Activated CD4-positive, alpha-beta memory T cell treated with anti-CD3 and anti-CD28 coated beads for 36 hours (primary cell): ENCODE measurements at regions of chr21 and their contacts with region 1.

Region 1: DNA sequence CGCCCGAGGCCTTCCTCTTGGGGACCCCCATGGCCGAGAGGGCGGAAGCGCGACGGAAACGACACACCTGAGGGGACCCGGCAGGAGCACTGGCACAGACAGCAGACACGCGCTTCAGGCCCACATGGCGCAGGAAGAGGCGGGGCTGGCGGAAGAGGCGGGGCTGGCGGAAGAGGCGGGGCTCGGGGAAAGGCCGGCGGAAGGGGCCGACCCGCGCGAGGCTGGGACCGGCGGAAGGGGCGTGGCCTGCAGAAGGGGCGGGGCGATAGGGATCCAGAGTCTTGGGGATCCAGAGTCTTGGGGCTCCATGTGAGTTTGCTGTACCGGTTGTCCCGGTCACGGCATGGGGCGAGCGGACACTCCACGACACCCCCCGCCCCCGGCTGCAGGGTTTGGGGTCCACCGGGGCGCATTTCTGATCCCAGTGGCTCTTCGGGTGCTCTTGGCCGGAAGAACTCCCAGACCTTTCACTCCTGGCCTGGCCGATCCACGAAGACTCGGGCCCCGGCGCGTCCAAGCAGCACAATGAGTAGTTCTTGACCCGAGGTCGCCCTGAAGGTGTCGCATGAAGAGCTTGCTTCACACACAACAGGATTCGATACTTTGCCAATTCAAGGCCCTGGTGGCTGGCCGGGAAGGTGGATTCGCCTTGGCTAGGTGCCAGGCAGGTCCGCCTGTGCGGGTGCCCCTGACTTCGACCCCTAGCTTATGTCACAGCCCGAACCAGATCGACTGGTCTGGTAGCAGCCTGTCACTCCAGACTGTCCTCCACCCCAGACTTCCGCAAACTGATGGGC is at the start of gene URB1:
- DNase-seq: peak; percentile 96
- H3K4me3 Mint-ChIP-seq: peak within 1 kb of the TSS; percentile 80
- H3K27ac Mint-ChIP-seq: peak within 1 kb of the TSS; percentile 51
- H3K4me1 Mint-ChIP-seq: peaks cover 43% of the 10 kb centered on the region
- H3K27me3 Mint-ChIP-seq: peaks cover 2% of the 10 kb centered on the region
- total RNA-seq, gene URB1: 21.5 to 23.4 TPM

Region 2: GRCh38 chr21:32278518-32279376 is 114.3 kb before region 1 on chr21 and contains the start of gene MIS18A:
- CTCF ChIA-PET with region 1: no interaction called
- POLR2A ChIA-PET with region 1: no interaction called
- intact Hi-C with region 1: loop called (anchors 1 kb)
- DNase-seq: peak; percentile 99
- H3K4me3 Mint-ChIP-seq: peak within 1 kb of the TSS; percentile 99
- H3K27ac Mint-ChIP-seq: peak within 1 kb of the TSS; percentile 88
- H3K4me1 Mint-ChIP-seq: peaks cover 11% of the 10 kb centered on the region
- H3K27me3 Mint-ChIP-seq: no peaks in the 10 kb centered on the region
- total RNA-seq, gene MIS18A: 34.2 to 36.1 TPM

Region 3: DNA sequence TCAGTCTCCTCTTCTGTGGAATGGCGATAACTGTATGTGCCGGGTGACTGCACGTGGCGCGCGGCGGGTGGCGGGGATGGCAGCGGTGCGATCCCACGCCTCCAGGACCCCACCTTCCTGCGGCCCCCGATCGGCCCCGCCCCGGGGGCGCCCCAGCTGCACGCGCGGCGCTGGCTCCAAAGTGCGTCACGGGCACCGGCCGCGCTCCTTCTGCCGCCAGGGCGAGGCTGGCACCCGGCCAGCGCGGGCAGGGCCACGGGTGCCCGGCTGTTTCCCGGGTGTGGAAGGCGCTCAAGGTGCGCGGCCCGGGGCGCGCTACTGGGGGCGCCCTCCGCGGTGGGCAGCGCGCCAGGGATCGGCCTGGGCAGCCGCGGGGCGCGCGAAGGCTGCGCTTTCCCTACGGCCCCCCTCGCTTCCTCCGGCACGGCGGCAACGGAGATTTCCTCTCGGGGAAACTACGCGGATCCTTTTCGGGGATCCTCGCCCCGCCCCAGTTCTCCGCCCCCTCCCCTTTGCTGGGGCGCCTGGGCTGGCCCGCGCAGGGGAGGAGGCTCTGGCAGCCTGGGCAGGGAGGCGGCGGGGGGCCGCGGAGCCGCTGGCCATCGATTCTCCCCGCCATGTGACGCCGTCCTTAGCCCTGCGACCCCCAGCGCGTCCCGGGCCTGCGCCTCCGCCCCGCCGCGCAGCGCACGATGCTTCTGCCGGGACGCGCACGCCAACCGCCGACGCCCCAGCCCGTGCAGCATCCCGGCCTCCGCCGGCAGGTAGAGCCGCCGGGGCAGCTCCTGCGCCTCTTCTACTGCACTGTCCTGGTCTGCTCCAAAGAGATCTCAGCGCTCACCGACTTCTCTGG is 19.3 kb after region 1 on chr21 and contains the start of gene EVA1C:
- CTCF ChIA-PET with region 1: interaction called, 6 read pairs
- POLR2A ChIA-PET with region 1: interaction called, 15 read pairs
- intact Hi-C with region 1: loop called (anchors 1 kb)
- DNase-seq: peak; percentile 76
- H3K4me3 Mint-ChIP-seq: peak within 1 kb of the TSS; percentile 91
- H3K27ac Mint-ChIP-seq: peak within 1 kb of the TSS; percentile 89
- H3K4me1 Mint-ChIP-seq: peaks cover 33% of the 10 kb centered on the region
- H3K27me3 Mint-ChIP-seq: no peaks in the 10 kb centered on the region
- total RNA-seq, gene EVA1C: 9.3 to 9.6 TPM

Region 4: DNA sequence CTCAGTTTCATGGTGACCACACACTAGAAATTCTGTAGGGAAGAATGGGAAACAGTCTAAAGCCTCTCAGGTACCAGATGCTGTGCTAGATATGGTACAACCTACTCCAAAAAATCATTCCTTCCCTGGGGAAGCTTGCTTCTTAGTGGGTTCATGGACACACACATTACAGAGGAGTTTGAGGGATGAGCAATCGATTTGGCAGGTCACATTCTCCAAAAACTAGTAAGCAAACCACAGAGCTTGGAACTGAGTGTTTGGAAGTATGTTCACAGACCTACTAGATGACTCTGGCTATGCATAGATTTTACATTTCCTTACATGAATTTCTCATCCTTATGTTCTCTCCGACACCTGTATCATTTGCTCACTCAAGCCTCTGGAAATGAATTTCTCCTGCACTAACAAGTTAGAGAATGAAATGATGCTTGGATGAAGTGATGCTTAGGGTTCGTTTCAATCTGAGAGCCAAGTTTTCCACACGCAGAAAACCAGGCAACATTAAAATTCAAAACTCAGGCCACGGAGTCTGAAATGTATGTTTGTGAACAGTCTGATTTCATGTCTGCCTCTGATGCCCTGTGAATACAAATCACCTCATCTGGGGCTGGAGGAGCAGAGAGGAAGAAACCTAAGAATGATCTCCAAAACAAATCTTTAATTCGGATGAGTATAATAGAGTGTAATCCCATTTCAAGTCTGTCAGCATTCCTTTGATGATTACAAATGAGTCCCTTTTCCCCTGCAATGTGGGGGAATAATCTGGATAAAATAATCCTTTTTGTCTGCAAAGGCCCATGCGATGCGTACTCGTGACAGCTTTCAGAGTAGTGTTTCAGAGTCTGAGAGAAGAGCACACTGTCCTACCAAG is 30.5 kb after region 1 on chr21:
- CTCF ChIA-PET with region 1: no interaction called
- POLR2A ChIA-PET with region 1: no interaction called
- intact Hi-C with region 1: no loop called
- DNase-seq: no peak
- H3K4me3 Mint-ChIP-seq: no peak overlapping the region
- H3K27ac Mint-ChIP-seq: no peak overlapping the region
- H3K4me1 Mint-ChIP-seq: no peaks in the 10 kb centered on the region
- H3K27me3 Mint-ChIP-seq: no peaks in the 10 kb centered on the region

Region 5: DNA sequence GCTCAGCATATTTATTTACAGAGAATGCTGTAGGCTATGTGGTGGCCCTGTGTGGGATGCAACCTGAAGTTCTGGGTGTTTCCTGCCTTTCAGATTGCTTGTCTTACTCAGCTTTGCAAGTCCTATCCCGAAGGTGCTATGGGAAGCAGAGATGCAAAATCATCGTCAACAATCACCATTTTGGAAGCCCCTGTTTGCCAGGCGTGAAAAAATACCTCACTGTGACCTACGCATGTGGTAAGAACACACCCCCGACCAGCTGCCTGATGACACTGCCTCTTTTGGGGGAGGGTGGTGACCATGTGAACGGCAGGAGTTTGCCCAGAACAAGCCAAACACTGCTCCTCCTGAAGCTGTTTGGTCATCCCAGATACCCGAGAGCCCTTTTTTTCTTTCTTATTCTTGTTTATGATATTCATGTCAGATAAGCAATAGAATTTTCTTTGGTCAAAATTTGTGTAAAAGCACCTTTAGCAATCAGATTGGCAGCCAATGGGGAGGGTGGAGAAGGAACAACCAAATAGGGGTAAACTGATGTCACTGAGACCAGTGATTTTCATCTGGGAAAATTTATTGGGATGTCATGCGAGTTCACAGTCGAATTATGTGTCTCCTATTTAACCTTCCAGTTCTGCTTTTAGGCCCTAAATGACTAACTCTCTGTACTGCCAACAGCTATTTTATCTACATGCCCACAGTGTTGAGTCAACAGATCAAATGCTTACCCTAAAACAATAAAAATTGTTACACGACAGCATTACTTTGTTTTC is 102.0 kb after region 1 on chr21:
- CTCF ChIA-PET with region 1: no interaction called
- POLR2A ChIA-PET with region 1: no interaction called
- intact Hi-C with region 1: loop called (anchors 5 kb)
- DNase-seq: no peak
- H3K4me3 Mint-ChIP-seq: no peak overlapping the region
- H3K27ac Mint-ChIP-seq: no peak overlapping the region
- H3K4me1 Mint-ChIP-seq: no peaks in the 10 kb centered on the region
- H3K27me3 Mint-ChIP-seq: no peaks in the 10 kb centered on the region

Region 6: GRCh38 chr21:32604464-32604863 is 211.4 kb after region 1 on chr21:
- CTCF ChIA-PET with region 1: interaction called, 17 read pairs
- POLR2A ChIA-PET with region 1: no interaction called
- intact Hi-C with region 1: no loop called
- DNase-seq: no peak
- H3K4me3 Mint-ChIP-seq: no peak overlapping the region
- H3K27ac Mint-ChIP-seq: no peak overlapping the region
- H3K4me1 Mint-ChIP-seq: peaks cover 3% of the 10 kb centered on the region
- H3K27me3 Mint-ChIP-seq: no peaks in the 10 kb centered on the region